ENCODE measurements at regions of chr12 and their contacts with region 1.

Region 1: DNA sequence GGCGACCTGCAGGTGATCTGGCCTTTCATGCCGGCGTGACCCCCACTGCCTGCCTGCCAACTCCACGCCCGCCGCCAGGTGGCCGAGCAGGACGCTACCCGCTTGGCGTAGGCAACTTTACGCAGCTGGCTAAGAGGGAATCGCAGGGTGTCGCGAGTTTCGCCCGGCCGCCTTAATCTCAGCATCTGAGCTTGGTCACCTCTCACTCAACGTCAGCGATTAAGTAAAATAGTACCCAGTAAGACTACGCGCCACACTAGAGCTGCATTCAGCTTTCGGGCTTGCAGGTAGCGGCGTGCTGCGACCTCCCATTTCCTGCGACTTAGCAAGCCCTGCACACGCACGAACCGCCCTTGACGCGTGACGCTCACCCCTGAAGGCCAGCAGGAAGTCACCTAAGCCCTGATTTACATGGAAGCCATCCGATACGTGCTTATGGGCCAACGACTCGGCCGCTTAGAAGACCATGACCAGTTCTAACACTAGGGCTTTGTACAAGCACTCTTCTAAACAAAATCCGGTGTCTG is 33.2 kb downstream of the WBP11 start:
- DNase-seq: peak; percentile 74
- CTCF ChIP-seq: peak; percentile 88

Region 2: GRCh38 chr12:14589169-14590004 is 180.6 kb before region 1 on chr12:
- CTCF ChIA-PET with region 1: no interaction called
- POLR2A ChIA-PET with region 1: no interaction called
- DNase-seq: no peak
- CTCF ChIP-seq: no peak

Region 3: GRCh38 chr12:14782756-14783155 is 12.7 kb after region 1 on chr12:
- CTCF ChIA-PET with region 1: interaction called, 20 read pairs
- POLR2A ChIA-PET with region 1: interaction called, 13 read pairs
- DNase-seq: no peak
- CTCF ChIP-seq: no peak

Region 4: GRCh38 chr12:14795028-14795448 is 25.0 kb after region 1 on chr12:
- CTCF ChIA-PET with region 1: interaction called, 11 read pairs
- POLR2A ChIA-PET with region 1: interaction called, 3 read pairs
- DNase-seq: no peak
- CTCF ChIP-seq: no peak

Region 5: GRCh38 chr12:14803011-14803829 is 33.2 kb after region 1 on chr12 and contains the starts of genes C12orf60 and WBP11:
- CTCF ChIA-PET with region 1: interaction called, 9 read pairs
- POLR2A ChIA-PET with region 1: interaction called, 12 read pairs
- DNase-seq: peak; percentile 92
- CTCF ChIP-seq: no peak